ENCODE measurements at regions of chr3 and their contacts with region 1.

Region 1: GRCh38 chr3:113051302-113051711 is 60.5 kb downstream of the GTPBP8 start:
- DNase-seq: peak; percentile 93
- H3K4me3 ChIP-seq: peak overlapping the region in 2 of 4 donors; percentile 7 to 17
- H3K27ac ChIP-seq: peak overlapping the region; percentile 71 to 75 (median 74)
- H3K4me1 ChIP-seq: peaks cover 0 to 23% (median 16%) of the 10 kb centered on the region in 4 donors
- H3K27me3 ChIP-seq: no peaks in the 10 kb centered on the region
- CTCF ChIP-seq: peak; percentile 83 to 97 (median 93)
- EP300 ChIP-seq: no peak
- POLR2A ChIP-seq: no peak

Region 2: GRCh38 chr3:113151461-113152031 is 100.2 kb after region 1 on chr3:
- intact Hi-C with region 1: loop called (anchors 5 kb)
- DNase-seq: peak; percentile 93
- H3K4me3 ChIP-seq: no peak overlapping the region
- H3K27ac ChIP-seq: peak overlapping the region; percentile 73 to 88 (median 82)
- H3K4me1 ChIP-seq: peaks cover 0 to 81% (median 72%) of the 10 kb centered on the region in 4 donors
- H3K27me3 ChIP-seq: no peaks in the 10 kb centered on the region
- CTCF ChIP-seq: no peak
- EP300 ChIP-seq: peak in 1 of 4 donors; percentile 30
- POLR2A ChIP-seq: no peak

Region 3: DNA sequence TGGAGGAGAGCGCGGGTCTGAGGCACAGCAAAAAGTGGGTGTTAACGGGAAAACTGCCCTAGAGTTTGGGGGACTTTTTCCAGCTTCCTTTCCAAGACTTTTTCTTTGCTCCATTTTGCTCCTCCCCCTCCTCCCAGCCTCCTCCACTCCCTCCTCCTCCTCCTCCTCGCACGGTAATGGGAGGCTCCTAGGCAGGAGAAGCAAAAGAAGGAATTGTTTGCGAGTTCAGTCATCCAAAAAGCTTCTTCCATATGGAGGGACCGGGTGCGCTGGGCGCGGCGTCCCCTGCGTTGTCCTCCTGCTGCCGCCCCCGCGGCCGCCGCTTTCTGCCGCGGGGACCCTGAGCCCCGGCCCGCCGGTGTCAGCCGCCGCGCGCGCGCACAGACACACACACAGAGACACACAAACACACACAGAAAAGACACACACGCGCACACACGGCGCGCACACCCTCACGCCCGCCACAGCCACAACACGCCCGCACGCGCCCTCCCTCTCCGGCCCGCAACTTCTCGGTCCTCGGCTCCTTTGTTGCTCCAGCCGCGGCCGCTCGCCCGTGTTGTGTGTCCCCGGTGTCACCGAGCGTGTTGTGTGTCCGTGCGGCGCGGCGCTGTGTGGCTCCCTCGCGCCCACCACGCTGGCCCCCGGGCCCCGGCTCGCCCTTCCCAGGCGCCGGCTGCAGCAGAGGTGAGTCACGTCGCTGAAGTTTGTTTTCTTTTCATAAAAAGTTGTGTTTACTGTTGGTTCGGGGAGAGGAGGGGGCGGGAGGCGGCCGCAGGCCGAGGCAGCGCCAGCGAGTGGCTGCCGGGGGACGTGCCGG is 160.2 kb after region 1 on chr3 and contains the start of gene BOC:
- intact Hi-C with region 1: loop called (anchors 2 kb)
- DNase-seq: peak; percentile 77
- H3K4me3 ChIP-seq: peak within 1 kb of the TSS; percentile 73 to 97 (median 91)
- H3K27ac ChIP-seq: peak within 1 kb of the TSS; percentile 95 to 97 (median 96)
- H3K4me1 ChIP-seq: peaks cover 0 to 53% (median 25%) of the 10 kb centered on the region in 4 donors
- H3K27me3 ChIP-seq: no peaks in the 10 kb centered on the region
- CTCF ChIP-seq: no peak
- EP300 ChIP-seq: no peak
- POLR2A ChIP-seq: no peak
- total RNA-seq, gene BOC: 80.3 to 122 (median 103) TPM

Region 4: GRCh38 chr3:113287803-113288648 is 236.7 kb after region 1 on chr3:
- intact Hi-C with region 1: loop called (anchors 1 kb)
- DNase-seq: peak; percentile 72
- H3K4me3 ChIP-seq: no peak overlapping the region
- H3K27ac ChIP-seq: peak overlapping the region; percentile 56 to 69 (median 66)
- H3K4me1 ChIP-seq: peaks cover 0 to 59% (median 46%) of the 10 kb centered on the region in 4 donors
- H3K27me3 ChIP-seq: no peaks in the 10 kb centered on the region
- CTCF ChIP-seq: peak; percentile 99 to 100 (median 99)
- EP300 ChIP-seq: no peak
- POLR2A ChIP-seq: no peak

Region 5: GRCh38 chr3:113514265-113514769 is 463.0 kb after region 1 on chr3:
- intact Hi-C with region 1: loop called (anchors 5 kb)
- DNase-seq: no peak
- H3K4me3 ChIP-seq: peak overlapping the region; percentile 72 to 93 (median 88)
- H3K27ac ChIP-seq: peak overlapping the region; percentile 87 to 95 (median 92)
- H3K4me1 ChIP-seq: peaks cover 0 to 19% (median 16%) of the 10 kb centered on the region in 4 donors
- H3K27me3 ChIP-seq: no peaks in the 10 kb centered on the region
- CTCF ChIP-seq: no peak
- EP300 ChIP-seq: no peak
- POLR2A ChIP-seq: no peak

Region 6: GRCh38 chr3:113575206-113575605 is 523.9 kb after region 1 on chr3:
- intact Hi-C with region 1: loop called (anchors 5 kb)
- DNase-seq: no peak
- H3K4me3 ChIP-seq: no peak overlapping the region
- H3K27ac ChIP-seq: no peak overlapping the region
- H3K4me1 ChIP-seq: no peaks in the 10 kb centered on the region
- H3K27me3 ChIP-seq: no peaks in the 10 kb centered on the region
- CTCF ChIP-seq: no peak
- EP300 ChIP-seq: no peak
- POLR2A ChIP-seq: no peak

Region 7: DNA sequence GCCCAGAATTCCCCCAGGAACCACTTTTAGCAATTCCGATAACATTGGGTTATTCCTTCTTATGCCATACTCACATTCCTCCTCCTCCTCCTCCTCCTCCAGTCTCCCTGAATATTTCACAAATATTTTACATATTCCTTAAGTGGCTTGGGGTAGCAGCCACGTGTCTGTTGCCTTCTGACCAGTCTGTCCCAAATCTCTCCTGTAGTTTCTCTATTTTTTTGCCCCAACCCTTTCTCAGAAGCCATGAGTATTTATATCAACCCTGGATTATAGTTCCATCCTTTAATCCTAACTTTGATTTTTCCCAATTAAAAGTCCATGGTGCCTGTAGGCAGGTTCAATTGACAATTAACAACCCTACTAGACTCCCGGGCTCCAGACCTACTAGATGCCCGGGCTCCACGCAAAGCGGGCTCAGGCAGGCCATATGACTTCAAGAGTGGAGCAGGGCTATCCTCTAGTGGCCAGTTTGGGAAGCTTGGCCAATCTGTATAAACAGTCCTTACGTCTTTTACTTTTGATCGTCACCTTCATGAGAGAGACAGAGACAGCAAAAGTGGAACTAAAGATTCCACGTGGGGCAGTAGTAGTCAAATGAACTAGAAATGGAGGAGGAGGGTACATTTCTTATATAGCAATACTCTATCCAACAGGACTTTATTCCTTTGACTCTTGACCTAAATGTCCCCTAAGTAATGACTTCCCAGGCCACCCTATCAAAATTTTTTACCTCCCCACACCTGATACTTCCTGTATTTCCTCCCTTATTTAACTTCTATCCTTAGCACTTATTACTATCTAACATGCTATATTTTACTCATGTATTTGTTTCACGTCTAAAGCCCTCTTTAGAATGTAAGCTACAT is 575.4 kb after region 1 on chr3:
- intact Hi-C with region 1: loop called (anchors 1 kb)
- DNase-seq: peak; percentile 82
- H3K4me3 ChIP-seq: peak overlapping the region in 2 of 4 donors; percentile 4 to 16
- H3K27ac ChIP-seq: peak overlapping the region in 1 of 4 donors; percentile 4
- H3K4me1 ChIP-seq: peaks cover 0 to 45% (median 24%) of the 10 kb centered on the region in 4 donors
- H3K27me3 ChIP-seq: no peaks in the 10 kb centered on the region
- CTCF ChIP-seq: peak; percentile 84 to 90 (median 88)
- EP300 ChIP-seq: no peak
- POLR2A ChIP-seq: no peak